Esophagus muscularis mucosa (tissue), 4 donors: ENCODE measurements at regions of chr7 and their contacts with region 1.

Region 1: DNA sequence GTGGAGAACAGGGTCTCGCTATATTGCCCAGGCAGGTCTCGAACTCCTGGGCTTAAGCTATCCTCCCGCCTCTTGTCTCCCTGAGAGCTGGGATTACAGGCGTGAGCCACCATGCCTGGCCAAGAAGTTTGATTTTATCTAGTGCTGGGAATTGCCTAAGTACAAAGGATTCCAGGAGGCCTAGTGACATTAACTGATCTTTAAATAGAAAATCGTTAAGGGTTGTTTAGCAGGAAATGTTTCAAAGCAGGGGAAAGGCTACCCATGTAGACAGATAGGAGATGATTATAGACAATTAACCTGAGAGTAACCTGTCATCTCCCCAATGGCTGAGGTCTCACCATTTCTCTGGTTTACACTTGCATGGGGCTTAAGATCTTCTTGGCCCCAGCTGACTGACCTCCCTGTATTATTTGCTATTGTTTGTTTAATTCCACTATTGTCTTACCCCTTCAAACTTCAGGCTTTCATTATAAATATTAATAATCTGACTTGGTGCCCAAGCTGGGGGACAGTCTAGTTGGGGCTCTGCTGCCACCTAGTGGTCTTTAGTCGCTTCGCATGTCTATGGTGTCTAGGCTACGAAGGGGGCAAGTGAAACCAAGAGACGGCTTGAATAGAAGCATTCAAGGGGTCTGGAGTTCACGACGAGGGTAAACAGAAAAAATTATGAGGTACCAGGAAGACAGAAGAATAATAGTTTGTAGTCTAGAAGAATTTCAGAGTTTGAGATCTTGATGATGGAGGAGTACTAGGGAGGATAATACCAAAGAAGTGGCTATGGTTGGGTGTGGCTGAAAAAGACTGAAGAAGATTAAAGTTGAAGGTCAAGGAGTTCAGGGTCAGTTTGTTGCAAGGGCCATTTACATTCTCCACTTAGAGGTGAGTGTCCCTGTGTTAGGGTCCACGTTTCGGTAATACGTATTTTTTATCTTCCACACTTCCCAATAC is 40.4 kb upstream of the BPGM start:
- DNase-seq: no peak
- H3K4me3 ChIP-seq: no peak overlapping the region
- H3K27ac ChIP-seq: peak overlapping the region in 2 of 4 donors; percentile 5 to 15
- H3K4me1 ChIP-seq: peaks cover 4 to 19% (median 12%) of the 10 kb centered on the region in 4 donors
- H3K27me3 ChIP-seq: peaks cover 0 to 5% (median 0%) of the 10 kb centered on the region in 4 donors
- CTCF ChIP-seq: peak; percentile 87 to 98 (median 92)
- EP300 ChIP-seq: no peak
- POLR2A ChIP-seq: no peak

Region 2: DNA sequence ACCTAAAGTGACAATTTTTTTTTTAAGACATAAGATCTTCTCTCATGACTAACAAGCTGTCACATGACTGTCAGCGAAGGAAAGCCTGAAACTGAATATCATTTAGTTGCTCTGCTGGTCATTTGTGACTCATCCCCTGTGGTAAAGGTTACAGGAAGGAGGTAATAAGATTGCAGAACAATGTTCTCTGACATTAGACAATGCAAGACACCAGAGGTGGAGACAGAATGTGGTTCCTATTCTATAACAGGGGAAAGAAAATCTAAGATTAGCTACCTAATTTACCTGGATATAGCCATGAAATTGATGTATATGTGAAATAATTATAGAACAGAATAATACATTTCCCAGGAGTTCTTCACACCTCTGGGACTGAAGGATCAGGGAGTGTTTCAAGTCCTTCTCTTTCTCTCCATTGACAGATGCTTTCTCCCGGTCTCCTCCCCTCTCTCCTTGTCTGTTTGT is 431.4 kb before region 1 on chr7:
- intact Hi-C with region 1: no loop called
- DNase-seq: no peak
- H3K4me3 ChIP-seq: no peak overlapping the region
- H3K27ac ChIP-seq: no peak overlapping the region
- H3K4me1 ChIP-seq: no peaks in the 10 kb centered on the region
- H3K27me3 ChIP-seq: no peaks in the 10 kb centered on the region
- CTCF ChIP-seq: no peak
- EP300 ChIP-seq: no peak
- POLR2A ChIP-seq: no peak

Region 3: DNA sequence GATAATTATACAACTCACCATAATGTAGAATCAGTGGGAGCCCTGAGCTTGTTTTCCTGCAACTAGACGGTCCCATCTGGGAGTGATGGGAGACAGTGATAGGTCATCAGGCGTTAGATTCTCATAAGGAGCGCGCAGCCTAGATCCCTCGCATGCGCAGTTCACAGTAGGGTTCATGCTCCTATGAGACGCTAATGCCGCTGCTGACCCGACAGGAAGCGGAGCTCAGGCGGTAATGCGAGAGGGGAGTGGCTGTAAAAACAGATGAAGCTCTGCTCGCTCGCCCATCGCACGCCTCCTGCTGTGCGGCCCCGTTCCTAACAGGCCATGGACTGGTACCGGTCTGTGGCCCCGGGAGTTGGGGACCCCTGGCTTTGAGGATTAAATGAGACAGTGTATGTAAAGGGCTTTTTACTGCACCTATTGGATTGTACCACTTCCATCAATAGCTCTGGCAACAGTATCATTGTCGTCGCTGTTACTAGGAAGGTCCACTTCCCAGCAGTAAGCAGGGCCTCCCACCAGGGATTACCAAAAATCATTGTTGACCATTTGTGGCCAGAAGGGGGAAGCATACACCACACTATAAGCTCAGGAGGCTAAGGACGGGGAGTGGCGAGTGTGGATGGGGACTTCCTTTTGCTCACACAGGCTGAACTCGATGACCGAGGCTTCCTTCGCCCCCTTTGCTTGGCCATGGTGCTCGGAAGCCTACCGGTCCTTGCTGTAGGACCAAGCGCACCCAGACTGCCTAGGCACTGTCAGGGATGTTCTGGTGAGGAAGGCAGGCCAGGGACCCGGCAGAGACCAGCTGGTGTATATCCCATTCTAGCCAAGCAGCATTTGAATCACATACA is 173.7 kb before region 1 on chr7:
- intact Hi-C with region 1: loop called (anchors 2 kb)
- DNase-seq: peak; percentile 96
- H3K4me3 ChIP-seq: peak overlapping the region; percentile 37 to 53 (median 48)
- H3K27ac ChIP-seq: peak overlapping the region; percentile 76 to 82 (median 79)
- H3K4me1 ChIP-seq: peaks cover 8 to 19% (median 16%) of the 10 kb centered on the region in 4 donors
- H3K27me3 ChIP-seq: no peaks in the 10 kb centered on the region
- CTCF ChIP-seq: peak; percentile 69 to 84 (median 72)
- EP300 ChIP-seq: no peak
- POLR2A ChIP-seq: no peak

Region 4: GRCh38 chr7:134514663-134515062 is 91.6 kb before region 1 on chr7:
- intact Hi-C with region 1: loop called (anchors 2 kb)
- DNase-seq: no peak
- H3K4me3 ChIP-seq: no peak overlapping the region
- H3K27ac ChIP-seq: no peak overlapping the region
- H3K4me1 ChIP-seq: peaks cover 0 to 7% (median 4%) of the 10 kb centered on the region in 4 donors
- H3K27me3 ChIP-seq: no peaks in the 10 kb centered on the region
- CTCF ChIP-seq: peak; percentile 74 to 83 (median 78)
- EP300 ChIP-seq: no peak
- POLR2A ChIP-seq: no peak

Region 5: DNA sequence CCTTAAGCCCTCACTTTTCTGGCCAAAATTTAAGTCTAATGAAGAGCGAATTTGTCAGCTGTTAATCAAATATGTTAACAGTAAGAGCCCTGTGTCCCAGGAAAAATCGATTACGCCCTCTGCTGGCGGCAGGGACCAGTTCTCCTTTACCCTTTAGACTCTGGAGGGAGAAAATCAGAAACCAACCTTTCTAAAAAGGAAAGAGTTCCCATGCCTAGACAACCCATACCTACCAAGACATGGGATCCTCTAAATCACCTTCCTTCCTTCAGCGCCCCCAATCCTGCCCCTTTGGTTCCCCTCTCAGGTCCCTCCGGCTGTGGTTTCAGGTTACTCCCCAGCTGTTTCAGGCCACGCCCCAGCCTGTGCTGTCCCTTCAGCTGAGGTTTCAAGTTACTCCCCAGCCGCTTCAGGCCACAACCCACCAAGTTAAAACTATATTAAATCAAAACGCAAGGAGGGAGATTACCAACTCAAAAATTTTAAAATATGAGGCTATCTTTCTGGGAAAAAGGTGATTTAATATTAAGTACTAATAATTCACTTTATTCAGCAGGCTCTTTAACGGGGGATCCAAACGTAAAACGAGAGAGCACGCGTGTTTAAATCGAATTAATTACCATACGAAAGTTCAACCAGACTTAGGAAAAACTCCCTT is 58.7 kb before region 1 on chr7:
- intact Hi-C with region 1: loop called (anchors 5 kb)
- DNase-seq: no peak
- H3K4me3 ChIP-seq: peak overlapping the region; percentile 42 to 56 (median 44)
- H3K27ac ChIP-seq: peak overlapping the region in 3 of 4 donors; percentile 14 to 58 (median 45)
- H3K4me1 ChIP-seq: peaks cover 0 to 8% (median 2%) of the 10 kb centered on the region in 4 donors
- H3K27me3 ChIP-seq: no peaks in the 10 kb centered on the region
- CTCF ChIP-seq: peak; percentile 78 to 90 (median 79)
- EP300 ChIP-seq: no peak
- POLR2A ChIP-seq: no peak

Region 6: DNA sequence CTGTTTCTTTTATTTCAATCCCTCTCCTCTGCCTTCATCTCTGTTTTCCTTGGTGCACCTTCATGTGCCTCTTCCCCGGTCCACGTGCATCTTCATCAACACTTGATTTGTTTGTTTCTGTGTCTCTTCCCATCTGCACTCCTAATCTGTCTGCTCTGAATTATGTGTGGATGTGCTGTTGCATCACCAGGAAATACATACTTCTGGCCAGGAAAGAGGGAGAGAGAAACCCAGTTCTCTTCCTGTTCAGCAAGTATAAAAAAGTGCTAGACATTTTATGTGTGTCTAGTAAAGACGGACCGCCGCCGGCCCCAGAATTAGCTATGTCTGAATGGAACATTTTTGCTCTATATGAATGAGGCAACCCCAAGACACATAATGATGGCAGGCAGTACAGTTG is 267.0 kb after region 1 on chr7:
- intact Hi-C with region 1: no loop called
- DNase-seq: no peak
- H3K4me3 ChIP-seq: no peak overlapping the region
- H3K27ac ChIP-seq: peak overlapping the region; percentile 74 to 87 (median 79)
- H3K4me1 ChIP-seq: peaks cover 23 to 99% (median 97%) of the 10 kb centered on the region in 4 donors
- H3K27me3 ChIP-seq: no peaks in the 10 kb centered on the region
- CTCF ChIP-seq: no peak
- EP300 ChIP-seq: no peak
- POLR2A ChIP-seq: no peak

Region 7: GRCh38 chr7:135083005-135083404 is 476.8 kb after region 1 on chr7:
- intact Hi-C with region 1: no loop called
- DNase-seq: no peak
- H3K4me3 ChIP-seq: no peak overlapping the region
- H3K27ac ChIP-seq: no peak overlapping the region
- H3K4me1 ChIP-seq: no peaks in the 10 kb centered on the region
- H3K27me3 ChIP-seq: no peaks in the 10 kb centered on the region
- CTCF ChIP-seq: no peak
- EP300 ChIP-seq: no peak
- POLR2A ChIP-seq: no peak